HEK293 (cell line): ENCODE measurements at regions of chr20 and their contacts with region 1.

Region 1: DNA sequence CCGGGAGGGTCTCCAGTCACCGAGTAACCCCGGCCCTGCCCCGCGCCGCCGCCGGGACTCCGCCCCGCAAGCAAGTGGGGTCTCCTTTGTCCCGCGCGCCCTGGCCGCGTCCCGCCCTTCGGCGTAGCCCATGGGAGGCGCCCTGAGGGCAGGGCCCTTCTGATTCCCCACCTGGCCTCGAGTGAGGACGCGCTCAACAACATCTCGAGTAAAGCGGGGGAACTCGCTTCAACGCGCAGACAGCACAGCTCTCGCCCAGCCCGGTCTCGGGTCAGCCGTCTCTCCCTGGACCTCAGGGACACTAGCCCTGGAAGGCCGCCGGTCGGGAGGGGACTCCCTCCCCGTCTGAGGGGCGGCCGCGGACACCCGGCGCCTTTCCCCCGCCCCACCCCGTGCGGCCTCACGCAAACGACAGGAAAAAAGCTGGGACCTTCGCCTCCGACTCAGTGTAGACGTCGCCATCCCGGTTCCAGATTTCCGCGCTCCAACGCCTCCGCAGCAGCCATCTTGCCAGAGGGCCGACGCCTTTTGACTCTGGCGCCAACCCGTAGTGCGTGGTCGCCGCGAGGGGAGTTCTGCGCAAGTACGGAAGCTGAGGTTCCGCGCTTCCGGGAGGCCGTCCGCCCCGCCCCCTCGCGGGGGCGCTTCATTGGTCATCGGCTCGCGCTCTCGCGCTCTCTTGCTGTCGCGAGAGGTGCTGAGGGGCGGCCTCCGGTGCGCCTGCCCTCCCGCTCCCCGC is 412 bp upstream of the GID8 start:
- H3K4me3 ChIP-seq: peak overlapping the region; percentile 88
- H3K27ac ChIP-seq: peak overlapping the region; percentile 77
- H3K4me1 ChIP-seq: peaks cover 9% of the 10 kb centered on the region; the same call in 1 of the 2 replicates
- CTCF ChIP-seq: no peak

Region 2: DNA sequence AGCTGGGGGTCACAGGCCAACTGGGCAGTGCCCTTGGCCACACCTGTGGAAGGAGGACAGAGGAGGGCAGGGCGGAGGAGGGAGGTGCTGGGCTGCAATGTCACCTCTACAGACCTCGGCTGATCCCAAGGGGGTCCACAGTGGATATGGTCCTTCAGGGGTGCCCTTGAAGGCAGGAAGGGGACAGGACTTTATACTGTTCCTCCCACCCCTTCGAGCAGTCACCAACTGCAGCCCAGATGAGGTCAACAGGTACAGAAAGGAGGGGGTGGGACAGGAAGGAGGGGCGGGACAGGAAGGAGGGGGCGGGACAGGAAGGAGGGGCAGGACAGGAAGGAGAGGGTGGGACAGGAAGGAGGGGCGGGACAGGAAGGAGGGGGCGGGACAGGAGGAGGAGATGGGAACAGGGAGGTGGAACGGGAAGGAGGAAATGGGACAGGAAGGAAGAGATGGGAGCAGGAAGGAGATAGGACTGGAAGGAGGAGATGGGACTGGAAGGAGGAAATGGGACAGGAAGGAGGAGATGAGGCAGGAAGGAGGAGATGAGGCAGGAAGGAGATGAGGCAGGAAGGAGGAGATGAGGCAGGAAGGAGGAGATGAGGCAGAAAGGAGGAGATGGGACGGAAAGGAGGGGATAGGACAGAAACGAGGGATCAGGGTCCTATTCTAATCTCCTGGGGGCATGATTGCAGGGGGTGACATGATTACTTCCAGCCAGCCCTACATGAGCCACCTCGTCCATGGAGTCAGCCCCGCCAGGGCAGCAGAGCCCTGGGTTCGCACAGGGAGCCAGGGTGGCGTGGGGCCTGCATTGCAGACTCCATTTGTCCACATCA is 160.6 kb before region 1 on chr20:
- CTCF ChIA-PET with region 1: no interaction called
- POLR2A ChIA-PET with region 1: no interaction called
- H3K4me3 ChIP-seq: no peak overlapping the region
- H3K27ac ChIP-seq: no peak overlapping the region
- H3K4me1 ChIP-seq: 0 out of 2 replicates have a peak, but pooled peaks cover 3% of the 10 kb centered on the region
- CTCF ChIP-seq: no peak

Region 3: DNA sequence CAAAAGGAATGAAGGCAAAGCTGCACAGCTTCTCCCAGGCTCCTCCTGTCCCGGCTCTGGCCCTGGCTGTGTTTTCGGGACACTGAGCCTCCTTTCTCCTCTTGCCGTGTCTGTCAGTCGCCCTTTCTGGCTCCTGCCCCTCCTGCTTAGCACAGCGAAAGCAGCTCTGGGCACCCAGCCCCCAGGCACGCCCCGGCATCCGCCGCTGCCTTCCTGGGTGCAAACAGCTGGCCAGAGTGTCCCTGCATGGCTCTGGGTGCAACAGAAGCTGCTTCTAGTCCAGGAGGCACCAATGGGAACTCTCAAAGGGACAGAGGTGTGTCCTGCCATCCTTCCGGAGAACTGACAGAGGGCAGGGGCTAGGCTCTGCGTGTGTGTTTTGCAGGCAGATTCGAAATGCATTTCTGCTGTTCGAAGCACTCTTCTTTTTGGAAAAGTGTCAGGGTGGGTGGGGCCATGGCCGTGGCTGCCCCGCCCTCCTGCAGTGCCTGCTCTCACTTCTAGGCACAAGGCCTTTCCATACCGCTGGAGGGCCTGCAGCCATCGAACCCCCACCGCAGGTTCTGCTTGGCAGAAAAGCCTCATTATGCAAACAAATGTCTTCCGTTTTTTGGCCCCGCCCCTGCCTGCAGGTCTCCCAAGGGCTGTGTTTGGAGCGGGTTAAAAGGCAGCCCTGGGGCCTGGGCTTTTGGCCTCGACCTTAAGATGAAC is 105.2 kb before region 1 on chr20:
- CTCF ChIA-PET with region 1: no interaction called
- POLR2A ChIA-PET with region 1: no interaction called
- H3K4me3 ChIP-seq: no peak overlapping the region
- H3K27ac ChIP-seq: no peak overlapping the region
- H3K4me1 ChIP-seq: no peaks in the 10 kb centered on the region; the same call in 1 of the 2 replicates
- CTCF ChIP-seq: peak; percentile 27; the same call in 1 of the 2 replicates

Region 4: GRCh38 chr20:62921119-62921687 is 16.3 kb before region 1 on chr20:
- CTCF ChIA-PET with region 1: interaction called, 12 read pairs
- POLR2A ChIA-PET with region 1: interaction called, 13 read pairs
- H3K4me3 ChIP-seq: no peak overlapping the region
- H3K27ac ChIP-seq: no peak overlapping the region
- H3K4me1 ChIP-seq: peaks cover 52% of the 10 kb centered on the region
- CTCF ChIP-seq: peak; percentile 60

Region 5: GRCh38 chr20:62926239-62927104 is 11.1 kb before region 1 on chr20 and contains the start of gene DIDO1:
- CTCF ChIA-PET with region 1: interaction called, 12 read pairs
- POLR2A ChIA-PET with region 1: interaction called, 13 read pairs
- H3K4me3 ChIP-seq: peak within 1 kb of the TSS; percentile 86
- H3K27ac ChIP-seq: peak within 1 kb of the TSS; percentile 89
- H3K4me1 ChIP-seq: peaks cover 19% of the 10 kb centered on the region
- CTCF ChIP-seq: peak; percentile 69